ENCODE measurements at regions of chr2 and their contacts with region 1.

Region 1: DNA sequence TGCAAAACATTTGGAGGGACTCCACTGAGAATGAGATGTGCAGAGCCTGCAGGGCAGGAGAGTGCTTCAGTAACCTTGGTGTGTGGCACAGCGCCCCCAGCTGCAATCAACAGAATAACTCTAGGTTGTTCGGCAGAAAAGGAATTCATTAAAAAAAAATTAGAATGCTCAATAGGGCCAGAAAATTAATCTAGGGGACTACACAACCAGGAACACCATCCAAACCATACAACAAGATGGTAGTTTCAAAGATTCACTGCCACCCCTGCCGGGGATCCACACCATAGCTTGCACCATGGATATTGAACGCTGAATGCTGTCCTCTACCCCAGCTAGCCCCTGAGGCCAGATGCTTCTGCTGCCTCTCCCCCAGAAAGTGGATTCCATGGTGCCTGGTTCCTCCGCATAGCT is 50.1 kb downstream of the THUMPD2 start:
- DNase-seq: peak; percentile 63
- ATAC-seq: peak; percentile 71
- H3K4me3 Mint-ChIP-seq: no peak overlapping the region
- H3K27ac Mint-ChIP-seq: no peak overlapping the region
- H3K4me1 Mint-ChIP-seq: peaks cover 19% of the 10 kb centered on the region
- H3K27me3 Mint-ChIP-seq: no peaks in the 10 kb centered on the region
- CTCF ChIP-seq: peak; percentile 84

Region 2: GRCh38 chr2:39377226-39377939 is 351.6 kb before region 1 on chr2:
- CTCF ChIA-PET with region 1: interaction called, 10 read pairs
- POLR2A ChIA-PET with region 1: no interaction called
- DNase-seq: no peak
- ATAC-seq: no peak
- H3K4me3 Mint-ChIP-seq: no peak overlapping the region
- H3K27ac Mint-ChIP-seq: peak overlapping the region; percentile 25
- H3K4me1 Mint-ChIP-seq: peaks cover 54% of the 10 kb centered on the region
- H3K27me3 Mint-ChIP-seq: no peaks in the 10 kb centered on the region
- CTCF ChIP-seq: no peak

Region 3: DNA sequence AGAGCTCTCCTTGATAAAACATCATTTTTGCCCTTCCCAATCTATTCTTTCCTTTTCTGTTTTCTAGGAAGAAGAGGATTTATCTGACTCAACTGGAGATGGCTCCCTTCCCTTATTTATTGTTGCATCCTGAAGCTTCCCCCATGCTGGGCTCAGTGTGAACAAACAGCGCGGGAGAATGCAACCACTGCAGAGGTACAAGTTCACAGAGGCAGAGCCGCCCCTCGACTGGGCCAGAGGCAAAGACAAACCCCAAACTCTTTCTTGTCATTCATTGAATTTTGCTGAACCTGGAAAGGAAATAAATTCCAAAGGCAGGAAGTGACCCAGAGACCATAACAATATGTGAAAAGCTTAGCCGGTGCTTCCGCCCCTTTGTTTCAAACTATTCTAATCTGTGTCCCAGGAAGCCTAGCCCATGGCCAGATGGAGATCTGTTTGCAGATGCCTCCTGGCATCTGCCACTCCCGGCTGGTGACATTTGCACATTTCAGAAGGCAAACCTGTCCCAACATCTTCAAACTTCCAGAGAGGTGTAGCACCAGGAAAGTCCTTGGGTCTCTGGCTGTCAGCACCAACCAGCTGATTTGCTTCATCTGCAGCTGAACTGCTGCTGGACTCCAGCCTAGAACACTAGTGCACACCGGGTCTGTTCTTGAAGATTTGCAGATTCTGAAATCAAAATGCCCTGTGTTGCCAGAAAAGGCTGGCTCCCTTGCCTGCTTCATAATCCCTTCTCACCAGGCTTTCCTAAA is 212.4 kb before region 1 on chr2:
- CTCF ChIA-PET with region 1: interaction called, 20 read pairs
- POLR2A ChIA-PET with region 1: no interaction called
- DNase-seq: peak; percentile 52
- ATAC-seq: peak; percentile 83
- H3K4me3 Mint-ChIP-seq: no peak overlapping the region
- H3K27ac Mint-ChIP-seq: peak overlapping the region; percentile 93
- H3K4me1 Mint-ChIP-seq: peaks cover 67% of the 10 kb centered on the region
- H3K27me3 Mint-ChIP-seq: no peaks in the 10 kb centered on the region
- CTCF ChIP-seq: no peak

Region 4: DNA sequence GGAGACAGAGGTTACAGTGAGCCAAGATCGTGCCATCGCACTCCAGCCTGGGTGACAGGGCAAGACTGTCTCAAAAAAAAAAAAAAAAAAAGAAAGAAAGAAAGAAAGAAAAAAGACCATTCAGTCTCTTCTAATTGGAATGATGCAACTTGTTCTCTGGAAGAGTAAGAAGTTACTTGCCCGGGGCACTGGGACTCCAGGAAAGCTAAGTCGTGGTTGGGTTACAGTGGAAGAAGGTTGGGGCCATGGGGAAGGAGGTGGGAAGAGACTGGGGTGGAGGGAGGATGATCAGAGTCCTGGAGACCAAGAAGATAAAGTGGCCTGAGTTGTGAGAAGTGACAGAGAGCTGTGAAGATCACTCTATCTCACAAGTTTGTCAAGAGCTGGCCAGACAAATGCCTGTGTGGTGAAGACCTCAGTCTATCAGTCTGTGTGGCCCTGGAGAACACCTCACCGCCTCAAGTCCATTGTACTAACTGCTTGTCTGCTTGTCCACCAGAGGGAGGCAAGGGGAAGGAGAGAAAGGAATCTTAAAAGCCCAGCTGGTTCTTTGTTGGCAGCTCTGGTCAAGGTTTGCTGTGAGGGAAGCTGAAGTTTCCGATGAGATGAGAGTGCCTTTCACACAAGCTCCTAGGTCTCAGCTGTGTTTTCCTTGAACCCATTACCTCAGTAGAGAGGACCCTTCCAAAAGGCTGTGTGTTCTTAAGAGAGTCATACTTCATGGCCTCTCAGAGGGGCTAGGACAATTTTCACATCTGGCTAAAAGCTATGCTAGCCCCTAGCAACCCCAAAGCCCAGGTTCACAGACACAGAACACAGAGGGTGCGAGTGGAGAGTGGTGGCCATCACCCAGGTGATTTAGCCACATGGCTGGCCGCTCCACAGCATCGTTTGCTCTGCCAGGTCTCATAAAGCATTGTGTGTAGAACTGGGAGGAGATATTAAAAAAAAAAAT is 135.2 kb before region 1 on chr2:
- CTCF ChIA-PET with region 1: interaction called, 74 read pairs
- POLR2A ChIA-PET with region 1: no interaction called
- DNase-seq: peak; percentile 40
- ATAC-seq: peak; percentile 97
- H3K4me3 Mint-ChIP-seq: no peak overlapping the region
- H3K27ac Mint-ChIP-seq: 0 out of 2 replicates have a peak overlapping the region, but pooled peaks have one; percentile 25
- H3K4me1 Mint-ChIP-seq: peaks cover 12% of the 10 kb centered on the region
- H3K27me3 Mint-ChIP-seq: no peaks in the 10 kb centered on the region
- CTCF ChIP-seq: no peak

Region 5: DNA sequence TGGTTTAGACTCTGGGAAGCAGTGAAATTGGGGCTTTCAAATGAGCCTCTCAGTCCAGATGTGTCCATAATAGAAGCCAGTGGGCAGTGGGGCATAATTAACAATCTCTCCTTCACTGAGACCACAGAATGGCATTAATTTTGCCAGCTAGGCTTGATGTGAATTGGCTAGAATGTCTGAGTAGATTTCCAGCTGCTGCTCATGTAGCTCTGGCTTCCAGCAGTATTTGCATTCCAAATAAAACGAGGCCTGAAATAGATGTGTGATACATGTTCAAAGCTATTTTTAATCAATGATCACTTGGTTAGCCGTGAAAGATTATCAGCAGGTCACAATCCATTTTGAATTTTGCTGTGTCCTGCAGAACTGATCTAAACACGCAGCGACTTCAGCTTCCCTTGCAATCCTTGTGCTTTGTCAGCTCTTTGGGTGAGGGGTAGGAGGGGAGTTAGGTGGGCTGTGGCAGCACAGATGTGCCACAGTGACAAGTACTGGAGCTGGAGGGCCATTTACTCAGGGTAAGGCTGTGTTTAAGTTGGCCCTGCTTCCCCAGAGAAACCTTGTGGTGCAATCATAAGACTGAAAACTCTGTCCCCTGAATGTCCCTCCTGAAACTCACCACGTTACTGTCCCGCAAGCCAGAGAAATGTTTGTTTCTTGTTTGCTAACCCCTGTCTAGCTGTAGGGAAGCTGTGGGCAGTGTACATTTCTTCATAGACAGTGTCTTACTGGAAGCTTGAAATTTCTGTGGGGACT is 120.1 kb before region 1 on chr2:
- CTCF ChIA-PET with region 1: interaction called, 11 read pairs
- POLR2A ChIA-PET with region 1: no interaction called
- DNase-seq: no peak
- ATAC-seq: peak; percentile 54
- H3K4me3 Mint-ChIP-seq: no peak overlapping the region
- H3K27ac Mint-ChIP-seq: no peak overlapping the region
- H3K4me1 Mint-ChIP-seq: peaks cover 21% of the 10 kb centered on the region
- H3K27me3 Mint-ChIP-seq: peaks cover 2% of the 10 kb centered on the region; the same call in 1 of the 2 replicates
- CTCF ChIP-seq: no peak

Region 6: GRCh38 chr2:39679805-39680204 is 49.1 kb before region 1 on chr2:
- CTCF ChIA-PET with region 1: no interaction called
- POLR2A ChIA-PET with region 1: no interaction called
- DNase-seq: no peak
- ATAC-seq: peak; percentile 50
- H3K4me3 Mint-ChIP-seq: no peak overlapping the region
- H3K27ac Mint-ChIP-seq: no peak overlapping the region
- H3K4me1 Mint-ChIP-seq: peaks cover 21% of the 10 kb centered on the region
- H3K27me3 Mint-ChIP-seq: no peaks in the 10 kb centered on the region
- CTCF ChIP-seq: no peak